ENCODE measurements at regions of chr4 and their contacts with region 1.

Region 1: GRCh38 chr4:121686255-121686654 is 10.5 kb downstream of the ANXA5 start:
- DNase-seq: no peak
- H3K4me3 ChIP-seq: no peak overlapping the region
- H3K27ac ChIP-seq: no peak overlapping the region
- H3K27me3 ChIP-seq: no peaks in the 10 kb centered on the region
- CTCF ChIP-seq: no peak

Region 2: DNA sequence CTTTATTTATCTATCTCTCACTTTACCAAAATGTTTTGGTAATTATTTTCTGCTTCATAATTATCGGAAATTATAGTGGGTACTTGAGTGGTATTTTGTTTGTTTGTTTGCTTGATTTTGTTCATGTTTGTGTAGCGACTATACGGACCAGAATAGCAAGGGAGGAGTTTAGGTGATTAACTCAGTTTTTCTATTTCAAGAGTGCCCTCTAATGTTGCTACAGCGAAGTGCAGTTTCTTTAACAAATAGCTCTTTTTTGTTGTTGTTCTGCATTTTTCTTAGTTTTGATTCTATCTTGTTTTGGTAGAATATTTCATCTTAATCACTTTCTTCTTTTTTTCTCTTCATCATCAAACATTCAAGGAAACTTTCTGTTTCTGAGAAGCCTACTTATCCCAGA is 264.7 kb before region 1 on chr4:
- CTCF ChIA-PET with region 1: no interaction called
- POLR2A ChIA-PET with region 1: no interaction called
- DNase-seq: no peak
- H3K4me3 ChIP-seq: no peak overlapping the region
- H3K27ac ChIP-seq: no peak overlapping the region
- H3K27me3 ChIP-seq: no peaks in the 10 kb centered on the region
- CTCF ChIP-seq: 0 out of 2 replicates have a peak, but pooled peaks have one; percentile 5

Region 3: GRCh38 chr4:121675715-121676114 is 10.5 kb before region 1 on chr4:
- CTCF ChIA-PET with region 1: interaction called, 11 read pairs
- POLR2A ChIA-PET with region 1: interaction called, 4 read pairs
- DNase-seq: no peak
- H3K4me3 ChIP-seq: no peak overlapping the region
- H3K27ac ChIP-seq: no peak overlapping the region
- H3K27me3 ChIP-seq: no peaks in the 10 kb centered on the region
- CTCF ChIP-seq: peak; percentile 56